ENCODE measurements at regions of chr2 and their contacts with region 1.

Region 1: DNA sequence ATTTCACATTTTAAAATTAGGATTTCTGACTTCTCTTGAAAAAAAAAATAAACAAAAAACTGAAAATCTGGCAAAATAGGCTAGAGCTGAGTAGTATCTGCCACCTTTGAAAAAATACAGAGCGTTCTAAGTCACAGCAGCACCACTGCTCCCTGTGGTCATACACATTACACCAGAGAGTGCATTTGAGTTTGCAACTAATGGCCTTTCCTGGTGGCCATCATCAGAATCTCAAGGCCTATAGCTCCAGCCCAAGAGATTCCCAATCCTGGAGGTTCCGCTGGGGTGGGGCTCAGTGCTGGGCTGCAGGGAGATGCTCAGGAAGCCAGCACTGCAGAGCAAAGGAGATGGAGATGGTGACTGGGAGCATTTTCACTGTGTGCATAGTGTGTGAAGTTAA is 17.5 kb downstream of the SMYD1 start:
- DNase-seq: no peak

Region 2: DNA sequence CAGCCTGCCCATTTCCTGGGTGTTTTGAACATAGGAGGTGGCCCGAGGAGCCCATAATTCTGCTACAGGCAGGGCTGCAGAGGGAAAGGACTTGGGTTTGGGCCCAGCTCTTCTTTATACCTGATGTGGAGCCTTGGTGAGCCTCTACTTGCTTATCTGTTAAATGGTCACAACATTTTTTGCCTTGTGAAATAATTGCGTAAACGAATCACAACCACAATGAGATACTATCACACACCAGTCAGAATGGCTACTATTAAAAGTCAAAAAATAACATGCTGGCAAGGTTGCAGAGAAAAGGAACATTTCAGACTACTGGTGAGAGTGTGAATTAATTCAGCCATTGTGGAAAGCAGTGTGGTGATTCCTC is 46.9 kb after region 1 on chr2:
- intact Hi-C with region 1: loop called (anchors 2 kb)
- DNase-seq: no peak

Region 3: GRCh38 chr2:88187038-88187676 is 102.1 kb after region 1 on chr2:
- intact Hi-C with region 1: no loop called
- DNase-seq: peak; percentile 46 to 91 (median 77)

Region 4: DNA sequence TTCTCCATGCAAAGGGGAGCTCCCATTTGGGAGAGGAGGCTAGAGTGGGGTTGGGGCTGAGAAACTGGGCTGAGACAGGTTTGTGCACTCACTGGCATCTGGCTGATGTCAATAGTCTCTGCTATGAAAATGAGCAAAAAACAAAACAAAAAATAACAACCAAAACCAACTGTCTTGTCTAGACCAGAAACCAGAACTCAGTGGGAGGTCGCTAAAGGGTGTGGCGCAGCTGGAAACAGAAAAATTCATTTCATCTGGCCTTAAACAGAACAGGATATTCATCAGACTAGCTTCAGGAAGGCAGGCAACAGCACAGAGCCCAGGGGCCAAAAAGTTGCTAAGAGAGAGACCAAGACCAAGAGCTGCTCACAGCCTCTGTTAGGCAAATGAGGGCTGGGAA is 211.1 kb after region 1 on chr2:
- intact Hi-C with region 1: no loop called
- DNase-seq: no peak